Heart left ventricle (tissue), 16 donors: ENCODE measurements at regions of chr14 and their contacts with region 1.

Region 1: GRCh38 chr14:22900081-22900799 is 17.2 kb downstream of the REM2 start:
- DNase-seq: no peak
- ATAC-seq: peak; percentile 29 to 69 (median 54)
- H3K4me3 ChIP-seq: no peak overlapping the region
- H3K27ac ChIP-seq: peak overlapping the region in 1 of 12 donors; percentile 72
- H3K4me1 ChIP-seq: peaks cover 0 to 10% (median 5%) of the 10 kb centered on the region in 12 donors
- H3K27me3 ChIP-seq: no peaks in the 10 kb centered on the region
- CTCF ChIP-seq: peak in 11 of 12 donors; percentile 28 to 64 (median 49)
- POLR2A ChIP-seq: no peak

Region 2: DNA sequence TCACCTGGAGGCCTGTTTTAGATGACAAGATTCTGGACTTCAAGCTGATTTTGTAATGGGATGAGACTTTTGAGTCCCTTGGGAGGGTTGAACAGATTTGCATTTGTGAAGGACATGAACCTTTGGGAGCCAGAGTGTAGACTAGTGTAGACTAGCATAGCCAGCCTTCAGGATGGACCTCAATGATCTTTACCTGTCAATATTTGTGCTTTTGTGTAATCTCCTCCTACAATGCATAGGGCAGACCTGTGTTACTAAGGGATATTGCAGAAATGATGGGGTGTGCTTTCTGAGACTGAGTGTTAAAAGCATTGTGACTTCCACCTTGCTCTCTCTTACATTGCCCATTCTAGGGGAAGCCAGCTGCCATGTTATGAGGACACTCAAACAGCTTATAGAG is 38.6 kb before region 1 on chr14:
- intact Hi-C with region 1: no loop called
- DNase-seq: no peak
- ATAC-seq: no peak
- H3K4me3 ChIP-seq: no peak overlapping the region
- H3K27ac ChIP-seq: no peak overlapping the region
- H3K4me1 ChIP-seq: peaks cover 0 to 5% (median 0%) of the 10 kb centered on the region in 12 donors
- H3K27me3 ChIP-seq: no peaks in the 10 kb centered on the region
- CTCF ChIP-seq: no peak
- POLR2A ChIP-seq: no peak

Region 3: DNA sequence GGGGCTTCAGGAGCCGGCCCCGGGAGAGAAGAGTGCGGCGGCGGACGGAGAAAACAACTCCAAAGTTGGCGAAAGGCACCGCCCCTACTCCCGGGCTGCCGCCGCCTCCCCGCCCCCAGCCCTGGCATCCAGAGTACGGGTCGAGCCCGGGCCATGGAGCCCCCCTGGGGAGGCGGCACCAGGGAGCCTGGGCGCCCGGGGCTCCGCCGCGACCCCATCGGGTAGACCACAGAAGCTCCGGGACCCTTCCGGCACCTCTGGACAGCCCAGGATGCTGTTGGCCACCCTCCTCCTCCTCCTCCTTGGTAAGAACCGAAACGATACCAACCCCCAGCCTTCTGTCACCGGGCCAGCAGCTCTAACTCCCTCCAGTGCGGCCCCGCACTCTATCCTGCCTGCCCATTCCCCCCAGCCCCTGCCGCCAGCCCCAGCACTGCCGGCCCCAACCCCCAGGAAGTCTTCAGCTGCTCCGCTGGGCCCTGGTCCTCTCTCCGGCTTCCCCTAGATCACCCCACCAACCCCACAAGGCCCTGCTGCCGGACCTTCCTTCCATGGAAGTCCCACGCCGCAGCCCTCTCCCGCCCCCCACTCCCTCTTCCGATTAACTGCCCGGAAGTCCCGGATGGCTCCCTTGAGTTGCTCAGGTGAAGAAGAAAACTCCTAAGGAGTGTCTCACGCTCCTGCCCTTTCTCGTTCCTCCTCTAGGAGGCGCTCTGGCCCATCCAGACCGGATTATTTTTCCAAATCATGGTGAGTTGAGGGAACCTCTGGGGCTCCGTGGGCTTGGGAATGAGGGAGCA is 28.0 kb before region 1 on chr14:
- intact Hi-C with region 1: loop called in 3 of 10 experiments (anchors 1 kb)
- DNase-seq: peak; percentile 70 to 80 (median 76)
- ATAC-seq: peak; percentile 6 to 60 (median 51)
- H3K4me3 ChIP-seq: peak overlapping the region; percentile 66 to 100 (median 95)
- H3K27ac ChIP-seq: peak overlapping the region; percentile 90 to 100 (median 98)
- H3K4me1 ChIP-seq: peaks cover 4 to 32% (median 18%) of the 10 kb centered on the region in 12 donors
- H3K27me3 ChIP-seq: no peaks in the 10 kb centered on the region
- CTCF ChIP-seq: peak; percentile 85 to 95 (median 89)
- POLR2A ChIP-seq: no peak

Region 4: DNA sequence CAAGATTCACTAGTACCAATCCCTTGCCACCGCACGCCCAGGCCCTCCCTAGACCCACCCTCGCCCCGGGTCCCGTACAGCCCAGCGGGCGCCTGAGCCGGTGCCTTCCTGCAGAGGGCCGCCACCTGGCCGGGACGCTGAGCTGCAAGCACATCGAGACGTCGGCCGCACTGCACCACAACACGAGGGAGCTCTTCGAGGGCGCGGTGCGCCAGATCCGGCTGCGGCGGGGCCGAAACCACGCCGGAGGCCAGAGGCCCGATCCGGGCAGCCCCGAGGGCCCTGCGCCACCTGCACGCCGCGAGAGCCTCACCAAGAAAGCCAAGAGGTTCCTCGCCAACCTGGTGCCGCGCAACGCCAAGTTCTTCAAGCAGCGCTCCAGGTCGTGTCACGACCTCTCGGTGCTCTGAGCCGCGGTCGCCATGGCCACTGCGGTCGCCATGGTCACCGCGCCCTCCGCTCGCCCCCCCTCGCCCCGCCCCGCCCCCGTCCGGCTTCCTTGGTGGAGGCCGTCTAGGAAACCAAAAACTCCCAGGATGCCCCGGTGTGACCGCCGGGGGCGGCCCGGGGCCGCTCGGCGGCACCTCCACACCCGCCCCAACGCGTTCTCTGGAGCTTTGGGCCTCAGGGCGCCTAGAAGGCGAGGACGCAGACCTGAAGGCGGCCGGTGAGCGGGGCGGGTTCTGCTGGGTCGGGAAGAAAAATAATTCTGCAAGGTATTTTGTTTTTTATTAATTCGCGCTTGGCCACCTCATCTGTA is 13.6 kb before region 1 on chr14:
- intact Hi-C with region 1: loop called in 1 of 10 experiments (anchors 2 kb)
- DNase-seq: peak; percentile 62 to 81 (median 72)
- ATAC-seq: peak; percentile 25 to 85 (median 78)
- H3K4me3 ChIP-seq: peak overlapping the region; percentile 33 to 73 (median 60)
- H3K27ac ChIP-seq: peak overlapping the region in 5 of 12 donors; percentile 2 to 71 (median 39)
- H3K4me1 ChIP-seq: peaks cover 0 to 28% (median 9%) of the 10 kb centered on the region in 12 donors
- H3K27me3 ChIP-seq: no peaks in the 10 kb centered on the region
- CTCF ChIP-seq: no peak
- POLR2A ChIP-seq: peak in 1 of 2 donors; percentile 17

Region 5: DNA sequence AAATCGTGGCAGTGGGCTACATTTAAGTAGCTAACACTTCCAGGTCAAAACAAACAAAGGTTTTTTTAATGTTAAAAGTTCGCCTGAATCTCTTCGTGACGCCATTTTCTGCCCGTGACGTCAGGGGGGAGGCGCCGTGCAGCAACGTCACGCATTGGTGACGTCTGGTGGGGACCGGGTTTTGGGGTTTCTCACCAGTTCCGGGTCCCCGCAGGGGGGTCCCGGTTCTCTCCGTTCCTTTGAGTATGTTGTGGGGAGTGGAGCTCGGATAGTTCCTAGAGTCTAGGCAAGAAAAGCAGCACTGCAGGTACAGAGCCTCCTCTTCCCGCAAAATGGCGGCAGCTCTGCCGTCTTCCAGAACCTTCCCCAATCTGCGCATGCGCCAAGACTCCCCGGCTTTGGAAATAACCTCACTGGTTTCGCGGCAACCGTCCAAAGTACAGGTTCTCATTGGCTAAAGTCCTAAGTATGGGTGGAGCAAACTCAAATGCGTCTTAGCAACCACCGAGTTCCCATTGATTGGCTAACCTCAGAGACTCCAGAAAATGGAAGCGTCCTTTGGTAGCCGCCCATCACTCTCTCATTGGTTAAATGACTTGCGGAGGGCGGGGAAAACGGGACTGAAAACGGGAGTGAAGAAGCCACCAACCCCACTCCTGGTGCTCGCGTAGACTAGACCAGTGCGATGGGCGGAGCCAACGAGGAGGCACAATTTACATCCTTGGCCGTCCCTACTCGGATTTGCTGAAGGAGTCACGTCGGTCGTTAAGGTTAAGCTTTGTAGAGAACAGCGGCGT is 18.8 kb after region 1 on chr14 and contains the start of gene RBM23:
- intact Hi-C with region 1: no loop called
- DNase-seq: peak; percentile 100
- ATAC-seq: peak; percentile 92 to 96 (median 94)
- H3K4me3 ChIP-seq: peak within 1 kb of the TSS; percentile 55 to 94 (median 75)
- H3K27ac ChIP-seq: peak within 1 kb of the TSS; percentile 87 to 100 (median 95)
- H3K4me1 ChIP-seq: peaks cover 0 to 55% (median 24%) of the 10 kb centered on the region in 12 donors
- H3K27me3 ChIP-seq: no peaks in the 10 kb centered on the region
- CTCF ChIP-seq: no peak
- POLR2A ChIP-seq: peak; percentile 72 to 83
- total RNA-seq, gene RBM23: 35.4 to 45.0 (median 41.6) TPM

Region 6: DNA sequence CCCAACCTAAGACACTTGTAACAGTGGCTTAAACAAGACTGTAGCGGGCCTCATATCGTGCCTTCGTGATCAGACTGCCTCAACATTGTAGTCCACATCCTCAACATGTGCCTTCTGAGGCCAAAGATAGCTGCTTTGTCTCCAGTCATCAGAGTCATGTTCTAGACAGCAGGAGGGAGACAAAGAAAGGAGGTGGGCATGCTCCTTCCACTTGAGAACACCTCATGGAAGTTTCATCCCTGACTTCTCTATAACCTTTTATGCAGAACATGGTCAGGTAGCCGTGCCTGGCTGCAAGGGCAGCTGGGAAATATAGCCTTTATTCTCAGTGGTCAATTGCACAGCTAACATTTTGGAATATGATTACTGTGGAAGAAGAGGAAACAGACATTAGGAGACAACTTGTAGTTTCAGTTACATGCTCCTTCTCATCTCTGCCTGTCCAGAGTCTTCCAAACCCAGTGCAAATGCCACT is 710.6 kb after region 1 on chr14:
- intact Hi-C with region 1: no loop called
- DNase-seq: no peak
- ATAC-seq: no peak
- H3K4me3 ChIP-seq: no peak overlapping the region
- H3K27ac ChIP-seq: peak overlapping the region in 1 of 12 donors; percentile 24
- H3K4me1 ChIP-seq: peaks cover 0 to 8% (median 0%) of the 10 kb centered on the region in 12 donors
- H3K27me3 ChIP-seq: peaks cover 0 to 10% (median 0%) of the 10 kb centered on the region in 9 donors
- CTCF ChIP-seq: no peak
- POLR2A ChIP-seq: no peak